ENCODE measurements at regions of chr14 and their contacts with region 1.

Region 1: DNA sequence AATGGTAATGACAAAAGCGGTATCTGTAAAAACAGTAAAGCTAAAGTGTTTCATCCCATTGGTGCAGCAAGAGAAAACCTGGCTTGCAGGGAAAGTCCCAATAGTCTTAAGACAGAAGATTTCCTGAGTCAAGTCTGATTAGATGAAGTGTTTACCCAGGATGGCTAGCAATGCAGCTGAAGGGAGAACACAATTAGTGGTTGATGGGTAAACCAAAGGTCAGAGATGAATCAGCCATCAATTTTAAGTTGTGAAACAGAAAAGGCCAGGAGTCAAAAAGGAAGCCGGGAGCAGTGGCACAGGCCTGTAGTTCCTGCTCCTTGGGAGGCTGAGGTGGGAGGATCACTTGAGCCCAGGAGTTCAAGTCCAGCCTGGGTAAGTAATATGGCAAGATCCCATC is 52.6 kb downstream of the SEC23A start:
- DNase-seq: no peak
- ATAC-seq: no peak
- H3K4me3 ChIP-seq: no peak overlapping the region
- H3K4me3 Mint-ChIP-seq: no peak overlapping the region
- H3K27ac ChIP-seq: no peak overlapping the region
- H3K27ac Mint-ChIP-seq: no peak overlapping the region
- H3K4me1 ChIP-seq: no peaks in the 10 kb centered on the region
- H3K4me1 Mint-ChIP-seq: no peaks in the 10 kb centered on the region
- H3K27me3 ChIP-seq: no peaks in the 10 kb centered on the region
- H3K27me3 Mint-ChIP-seq: no peaks in the 10 kb centered on the region

Region 2: GRCh38 chr14:39322807-39323206 is 272.4 kb after region 1 on chr14:
- CTCF ChIA-PET with region 1: no interaction called
- POLR2A ChIA-PET with region 1: interaction called in 1 of 2 experiments, 10 read pairs
- DNase-seq: no peak
- ATAC-seq: no peak
- H3K4me3 ChIP-seq: no peak overlapping the region
- H3K4me3 Mint-ChIP-seq: no peak overlapping the region
- H3K27ac ChIP-seq: no peak overlapping the region
- H3K27ac Mint-ChIP-seq: peak overlapping the region in 1 of 2 donors; percentile 46
- H3K4me1 ChIP-seq: no peaks in the 10 kb centered on the region
- H3K4me1 Mint-ChIP-seq: no peaks in the 10 kb centered on the region
- H3K27me3 ChIP-seq: no peaks in the 10 kb centered on the region
- H3K27me3 Mint-ChIP-seq: no peaks in the 10 kb centered on the region

Region 3: DNA sequence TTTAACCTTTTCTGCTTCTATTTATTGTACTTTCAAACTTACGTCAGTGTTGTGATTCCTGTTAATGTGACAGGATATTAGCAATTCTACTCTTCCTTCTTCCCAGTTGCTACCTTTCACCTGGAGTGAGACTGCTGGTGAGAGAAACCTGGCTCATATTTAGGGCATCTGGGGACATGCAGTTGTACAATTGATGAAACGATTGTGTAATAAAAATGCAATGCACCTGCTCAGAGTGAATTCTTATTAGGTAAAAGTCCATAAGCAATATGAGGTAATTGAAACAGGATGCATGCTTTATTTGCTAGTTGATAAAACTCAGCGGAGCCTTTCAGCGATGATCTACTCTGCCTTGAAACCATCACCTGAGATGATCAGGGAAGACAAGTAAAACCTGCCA is 498.0 kb after region 1 on chr14:
- CTCF ChIA-PET with region 1: no interaction called
- POLR2A ChIA-PET with region 1: no interaction called
- DNase-seq: no peak
- ATAC-seq: no peak
- H3K4me3 ChIP-seq: no peak overlapping the region
- H3K4me3 Mint-ChIP-seq: no peak overlapping the region
- H3K27ac ChIP-seq: no peak overlapping the region
- H3K27ac Mint-ChIP-seq: no peak overlapping the region
- H3K4me1 ChIP-seq: no peaks in the 10 kb centered on the region
- H3K4me1 Mint-ChIP-seq: no peaks in the 10 kb centered on the region
- H3K27me3 ChIP-seq: no peaks in the 10 kb centered on the region
- H3K27me3 Mint-ChIP-seq: no peaks in the 10 kb centered on the region